ENCODE measurements at regions of chr3 and their contacts with region 1.

Region 1: DNA sequence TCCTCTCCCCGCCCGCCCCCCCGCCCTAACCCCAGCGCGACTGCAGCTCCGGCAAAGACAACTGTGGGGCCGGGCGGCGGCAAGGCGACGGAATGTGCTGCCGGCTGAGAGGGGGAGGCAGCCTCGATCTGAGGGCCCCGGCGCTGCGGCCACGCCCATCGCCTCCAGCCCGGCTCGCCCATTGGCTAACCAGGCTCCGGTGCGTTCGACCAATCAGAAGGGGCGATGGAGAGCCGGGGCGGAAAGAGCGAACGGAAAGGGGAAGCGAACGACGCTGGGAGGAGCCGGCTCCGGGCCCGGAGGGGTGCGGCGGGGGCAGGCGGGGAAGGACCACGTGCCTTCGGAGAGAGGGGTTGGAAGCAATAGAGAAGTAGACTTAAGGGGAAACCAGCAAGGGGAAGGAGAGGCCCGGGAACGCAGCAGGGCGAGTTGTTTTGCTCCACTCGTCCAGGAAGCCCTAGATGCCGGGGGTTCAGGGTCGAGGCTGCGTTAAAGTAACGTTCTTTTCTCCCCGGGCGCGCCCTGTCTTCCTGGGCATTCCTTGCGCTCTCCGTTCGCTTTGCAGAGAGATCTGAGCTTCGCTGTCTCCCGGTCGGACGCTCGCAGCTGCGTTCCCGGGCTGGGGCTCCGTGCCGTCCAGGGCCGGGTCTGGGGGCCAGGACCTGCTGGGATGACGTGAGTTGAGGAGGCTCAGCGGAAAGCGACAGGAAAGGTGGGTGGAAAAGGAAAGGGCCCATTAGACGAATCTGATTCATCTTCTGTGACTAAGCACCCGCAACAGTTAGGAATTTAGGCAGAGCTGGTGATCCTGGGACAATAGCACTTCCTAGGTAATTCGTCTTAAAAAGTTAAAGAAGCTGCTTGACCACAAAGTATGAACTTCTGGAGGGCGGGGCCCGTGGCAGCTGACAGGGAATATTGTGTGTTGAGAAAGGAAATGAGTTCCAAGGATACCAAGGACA is at the start of gene KPNA4:
- DNase-seq: peak; percentile 93 to 98
- H3K4me3 ChIP-seq: peak within 1 kb of the TSS; percentile 82 to 96
- H3K27ac ChIP-seq: peak within 1 kb of the TSS; percentile 98 to 99
- H3K4me1 ChIP-seq: peaks cover 4 to 21% of the 10 kb centered on the region in 2 donors
- H3K27me3 ChIP-seq: no peaks in the 10 kb centered on the region
- CTCF ChIP-seq: no peak
- total RNA-seq, gene KPNA4: 17.6 TPM

Region 2: DNA sequence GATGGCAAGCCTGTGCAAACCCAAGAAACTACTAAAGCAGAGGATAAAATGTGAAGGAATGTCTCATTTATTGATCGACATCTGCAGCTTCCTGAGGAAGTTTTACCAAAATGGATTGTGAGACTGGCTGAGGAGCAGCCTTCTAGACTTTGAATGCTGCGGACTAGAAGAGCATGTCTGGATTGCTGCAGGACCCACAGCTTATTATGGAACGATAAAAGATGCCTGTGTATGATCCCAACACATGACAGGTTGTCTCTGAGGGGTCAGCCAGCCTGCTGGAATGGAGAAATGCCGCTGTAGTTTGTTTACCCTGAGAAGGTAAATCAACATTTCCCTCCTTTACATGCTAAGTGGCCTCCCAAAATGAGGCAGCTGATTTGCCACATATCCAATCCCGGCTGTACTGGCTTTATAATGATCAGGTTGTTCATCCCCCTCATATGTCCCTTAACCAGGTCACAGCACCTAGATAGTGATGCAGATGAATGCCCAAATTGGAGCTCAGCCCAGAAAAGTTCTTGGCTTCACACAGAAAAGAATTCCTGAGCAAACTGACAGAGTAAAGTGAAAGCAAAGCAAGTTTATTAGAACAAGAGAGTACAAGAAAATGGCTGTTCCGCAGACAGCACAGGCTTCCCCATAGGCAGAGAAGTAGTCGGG is 513.2 kb before region 1 on chr3:
- intact Hi-C with region 1: no loop called
- DNase-seq: no peak
- H3K4me3 ChIP-seq: peak overlapping the region in 1 of 2 donors; percentile 24
- H3K27ac ChIP-seq: no peak overlapping the region
- H3K4me1 ChIP-seq: peaks cover 0 to 2% of the 10 kb centered on the region in 2 donors
- H3K27me3 ChIP-seq: no peaks in the 10 kb centered on the region
- CTCF ChIP-seq: no peak

Region 3: GRCh38 chr3:160154033-160154432 is 411.7 kb before region 1 on chr3:
- intact Hi-C with region 1: no loop called
- DNase-seq: no peak
- H3K4me3 ChIP-seq: no peak overlapping the region
- H3K27ac ChIP-seq: no peak overlapping the region
- H3K4me1 ChIP-seq: no peaks in the 10 kb centered on the region
- H3K27me3 ChIP-seq: no peaks in the 10 kb centered on the region
- CTCF ChIP-seq: no peak

Region 4: GRCh38 chr3:160399125-160400029 is 166.3 kb before region 1 on chr3 and contains the starts of genes IFT80 and SMC4:
- intact Hi-C with region 1: loop called (anchors 1 kb)
- DNase-seq: peak; percentile 79 to 98
- H3K4me3 ChIP-seq: peak within 1 kb of the TSS; percentile 64 to 73
- H3K27ac ChIP-seq: peak within 1 kb of the TSS; percentile 84 to 87
- H3K4me1 ChIP-seq: peaks cover 0 to 8% of the 10 kb centered on the region in 2 donors
- H3K27me3 ChIP-seq: no peaks in the 10 kb centered on the region
- CTCF ChIP-seq: no peak
- total RNA-seq, gene IFT80: 10.2 TPM
- total RNA-seq, gene SMC4: 5.0 TPM

Region 5: GRCh38 chr3:160449636-160450598 is 115.8 kb before region 1 on chr3 and contains the start of gene TRIM59:
- intact Hi-C with region 1: loop called (anchors 1 kb)
- DNase-seq: peak; percentile 85 to 94
- H3K4me3 ChIP-seq: peak within 1 kb of the TSS; percentile 68 to 74
- H3K27ac ChIP-seq: peak within 1 kb of the TSS; percentile 75 to 78
- H3K4me1 ChIP-seq: peaks cover 3 to 5% of the 10 kb centered on the region in 2 donors
- H3K27me3 ChIP-seq: no peaks in the 10 kb centered on the region
- CTCF ChIP-seq: peak in 1 of 3 experiments; percentile 4
- total RNA-seq, gene TRIM59: not detected

Region 6: DNA sequence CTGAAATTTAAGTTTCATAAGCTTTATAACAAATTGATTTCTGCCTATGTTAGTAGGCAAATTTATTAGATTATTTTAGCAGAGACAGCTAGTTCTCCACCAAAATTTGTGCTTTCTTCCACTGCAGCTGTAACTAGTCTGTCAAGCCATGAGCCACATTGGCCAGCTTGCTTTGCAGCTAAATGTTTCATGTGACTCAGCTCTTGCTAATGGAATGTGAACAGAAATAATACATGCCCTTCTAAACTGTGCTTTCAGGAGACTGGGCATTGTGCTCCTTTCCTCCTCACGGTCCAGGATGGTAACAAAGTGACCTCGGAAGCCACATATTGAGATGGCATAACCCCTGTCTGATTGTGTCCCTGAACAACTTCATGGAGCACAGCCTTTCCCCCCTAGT is 51.0 kb after region 1 on chr3:
- intact Hi-C with region 1: no loop called
- DNase-seq: no peak
- H3K4me3 ChIP-seq: no peak overlapping the region
- H3K27ac ChIP-seq: no peak overlapping the region
- H3K4me1 ChIP-seq: no peaks in the 10 kb centered on the region
- H3K27me3 ChIP-seq: no peaks in the 10 kb centered on the region
- CTCF ChIP-seq: no peak

Region 7: DNA sequence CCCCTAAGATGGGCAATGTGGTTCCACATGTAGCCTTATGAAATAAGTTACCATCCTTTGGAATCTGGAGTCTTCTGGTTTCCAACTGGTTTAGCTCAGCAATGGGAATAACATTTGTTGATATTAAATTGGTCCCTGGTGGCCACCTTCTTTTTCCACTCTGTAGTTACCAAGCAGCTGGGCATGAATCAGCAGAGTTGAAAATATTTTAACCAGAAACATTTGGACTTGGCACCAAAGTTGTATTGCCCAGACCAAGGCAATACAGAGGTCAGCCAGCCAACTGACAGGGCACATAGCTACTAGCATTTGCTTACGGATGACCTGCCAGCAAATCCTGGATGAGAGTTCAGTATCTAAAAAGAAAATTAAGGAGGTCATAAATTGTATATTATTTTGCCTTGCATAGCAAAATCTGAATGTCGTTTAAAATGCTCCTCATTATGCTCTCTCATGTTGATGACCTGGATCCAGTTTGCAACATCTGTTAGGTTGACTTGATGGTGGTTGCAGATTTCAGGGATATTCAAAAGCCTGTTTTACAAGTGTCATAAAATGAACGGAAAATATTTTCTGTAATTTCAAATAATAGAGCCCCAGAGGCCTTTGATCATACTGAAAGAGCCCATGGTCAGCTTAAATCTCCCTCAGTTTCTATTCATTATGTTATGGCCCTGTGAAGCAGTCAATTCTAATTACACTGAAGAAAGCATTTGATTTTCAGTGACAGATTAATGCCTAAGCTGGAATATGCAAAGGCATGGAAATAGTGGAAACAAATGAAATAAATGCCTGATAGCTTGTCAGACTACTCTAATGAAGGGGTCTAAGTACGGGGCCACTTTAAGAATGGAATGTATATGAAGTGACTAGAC is 244.9 kb after region 1 on chr3:
- intact Hi-C with region 1: loop called (anchors 2 kb)
- DNase-seq: peak in 1 of 2 donors; percentile 76
- H3K4me3 ChIP-seq: no peak overlapping the region
- H3K27ac ChIP-seq: peak overlapping the region; percentile 42 to 68
- H3K4me1 ChIP-seq: peaks cover 10 to 30% of the 10 kb centered on the region in 2 donors
- H3K27me3 ChIP-seq: no peaks in the 10 kb centered on the region
- CTCF ChIP-seq: no peak

Region 8: GRCh38 chr3:161220850-161221753 is 655.4 kb after region 1 on chr3 and contains the start of gene NMD3:
- intact Hi-C with region 1: loop called (anchors 5 kb)
- DNase-seq: peak; percentile 75 to 96
- H3K4me3 ChIP-seq: peak within 1 kb of the TSS; percentile 87 to 92
- H3K27ac ChIP-seq: peak within 1 kb of the TSS; percentile 93 to 95
- H3K4me1 ChIP-seq: peaks cover 0 to 9% of the 10 kb centered on the region in 2 donors
- H3K27me3 ChIP-seq: no peaks in the 10 kb centered on the region
- CTCF ChIP-seq: no peak
- total RNA-seq, gene NMD3: 34.1 TPM

Region 9: GRCh38 chr3:161343986-161344385 is 778.3 kb after region 1 on chr3:
- intact Hi-C with region 1: no loop called
- DNase-seq: no peak
- H3K4me3 ChIP-seq: no peak overlapping the region
- H3K27ac ChIP-seq: no peak overlapping the region
- H3K4me1 ChIP-seq: no peaks in the 10 kb centered on the region
- H3K27me3 ChIP-seq: no peaks in the 10 kb centered on the region
- CTCF ChIP-seq: no peak

Region 10: DNA sequence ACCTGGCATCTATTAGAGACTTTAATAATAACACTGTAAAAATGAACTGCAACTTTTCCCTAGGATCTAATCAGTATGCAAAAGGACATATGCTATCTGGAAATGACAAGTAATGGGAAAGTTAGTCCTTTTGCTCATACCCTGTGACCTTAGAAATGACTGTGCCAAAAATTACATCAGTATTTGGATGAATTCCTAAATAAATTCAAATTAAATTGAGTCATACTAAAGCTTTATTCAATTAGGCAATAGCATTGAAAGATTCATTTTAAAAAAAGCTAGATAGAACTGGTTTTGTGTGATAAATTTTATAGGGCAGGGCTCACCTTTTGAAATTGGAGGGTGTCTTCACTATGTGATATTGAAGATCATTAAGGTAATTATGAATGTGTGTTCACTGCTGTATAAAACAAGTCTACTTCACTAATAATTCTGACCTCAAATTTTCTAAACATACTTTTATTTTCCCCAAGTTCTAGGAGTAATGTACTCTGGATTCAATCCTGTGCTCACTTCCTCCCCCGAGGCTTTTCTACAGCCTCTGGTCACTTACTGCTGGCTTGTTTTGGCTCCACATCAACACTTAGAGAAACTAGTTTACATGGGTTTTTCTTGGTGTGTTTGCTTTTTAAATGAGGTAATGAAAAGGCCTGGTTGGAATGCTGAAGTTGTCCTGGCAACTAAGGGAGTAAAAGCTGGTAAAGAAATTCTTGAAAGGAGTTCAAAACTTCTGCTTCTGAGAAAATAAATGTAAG is 850.0 kb after region 1 on chr3:
- intact Hi-C with region 1: loop called (anchors 5 kb)
- DNase-seq: no peak
- H3K4me3 ChIP-seq: no peak overlapping the region
- H3K27ac ChIP-seq: peak overlapping the region; percentile 43 to 62
- H3K4me1 ChIP-seq: peaks cover 2 to 13% of the 10 kb centered on the region in 2 donors
- H3K27me3 ChIP-seq: no peaks in the 10 kb centered on the region
- CTCF ChIP-seq: no peak